Activated CD4-positive, alpha-beta T cell treated with anti-CD3 and anti-CD28 coated beads for 36 hours (primary cell): ENCODE measurements at regions of chr16 and their contacts with region 1.

Region 1: GRCh38 chr16:69565671-69566239 is at the start of gene NFAT5:
- DNase-seq: peak; percentile 94
- ATAC-seq: peak; percentile 25
- H3K4me3 Mint-ChIP-seq: peak within 1 kb of the TSS; percentile 99
- H3K27ac Mint-ChIP-seq: peak within 1 kb of the TSS; percentile 99
- H3K4me1 Mint-ChIP-seq: peaks cover 54% of the 10 kb centered on the region
- H3K27me3 Mint-ChIP-seq: no peaks in the 10 kb centered on the region
- total RNA-seq, gene NFAT5: 29.6 to 37.9 TPM

Region 2: DNA sequence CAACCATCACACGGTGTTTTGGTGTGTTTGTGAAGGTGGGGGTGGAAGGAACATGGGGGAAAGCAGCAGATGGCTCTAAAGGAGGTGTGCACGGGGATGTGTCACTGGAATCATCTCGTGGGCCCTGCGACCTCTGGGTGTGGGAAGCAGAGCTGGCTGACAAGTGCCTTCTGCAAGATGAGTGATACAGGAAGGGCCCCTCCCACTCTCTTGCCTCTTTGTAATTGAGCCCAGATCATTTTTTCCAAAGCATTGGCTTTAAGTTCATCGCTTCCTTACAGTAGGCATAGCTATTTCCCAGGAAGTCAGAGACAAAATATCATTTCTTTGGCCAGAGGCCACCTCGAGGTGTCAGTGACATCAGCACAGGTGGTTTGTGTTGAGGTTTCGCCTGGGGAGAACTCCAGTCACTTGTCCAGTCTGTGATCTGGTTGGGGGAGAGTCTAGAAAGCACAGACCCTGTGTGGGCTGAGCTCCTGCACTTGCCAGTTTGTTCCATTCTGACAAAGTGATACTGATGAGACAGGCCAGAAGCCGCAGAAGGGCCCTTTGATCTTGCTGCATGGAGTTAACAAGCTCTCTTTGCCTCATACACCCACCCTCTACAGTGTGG is 399.4 kb before region 1 on chr16:
- CTCF ChIA-PET with region 1: no interaction called
- POLR2A ChIA-PET with region 1: interaction called, 6 read pairs
- intact Hi-C with region 1: loop called in 1 of 2 experiments (anchors 2 kb)
- DNase-seq: peak; percentile 91
- ATAC-seq: peak; percentile 92
- H3K4me3 Mint-ChIP-seq: peak overlapping the region; percentile 32
- H3K27ac Mint-ChIP-seq: peak overlapping the region; percentile 87
- H3K4me1 Mint-ChIP-seq: peaks cover 52% of the 10 kb centered on the region
- H3K27me3 Mint-ChIP-seq: no peaks in the 10 kb centered on the region

Region 3: GRCh38 chr16:69386596-69386995 is 179.2 kb before region 1 on chr16:
- CTCF ChIA-PET with region 1: interaction called, 4 read pairs
- POLR2A ChIA-PET with region 1: no interaction called
- intact Hi-C with region 1: loop called in 1 of 2 experiments (anchors 1 kb)
- DNase-seq: no peak
- ATAC-seq: no peak
- H3K4me3 Mint-ChIP-seq: peak overlapping the region; percentile 100
- H3K27ac Mint-ChIP-seq: peak overlapping the region; percentile 55
- H3K4me1 Mint-ChIP-seq: peaks cover 29% of the 10 kb centered on the region
- H3K27me3 Mint-ChIP-seq: no peaks in the 10 kb centered on the region

Region 4: GRCh38 chr16:69465083-69465721 is 100.6 kb before region 1 on chr16:
- CTCF ChIA-PET with region 1: no interaction called
- POLR2A ChIA-PET with region 1: interaction called, 6 read pairs
- intact Hi-C with region 1: loop called in 1 of 2 experiments (anchors 1 kb)
- DNase-seq: peak; percentile 26
- ATAC-seq: peak; percentile 65
- H3K4me3 Mint-ChIP-seq: no peak overlapping the region
- H3K27ac Mint-ChIP-seq: peak overlapping the region; percentile 48
- H3K4me1 Mint-ChIP-seq: peaks cover 49% of the 10 kb centered on the region
- H3K27me3 Mint-ChIP-seq: no peaks in the 10 kb centered on the region

Region 5: GRCh38 chr16:69607674-69608073 is 41.9 kb after region 1 on chr16:
- CTCF ChIA-PET with region 1: no interaction called
- POLR2A ChIA-PET with region 1: interaction called, 10 read pairs
- intact Hi-C with region 1: loop called (anchors 1 to 5 kb)
- DNase-seq: no peak
- ATAC-seq: peak; percentile 75
- H3K4me3 Mint-ChIP-seq: peak overlapping the region; percentile 48
- H3K27ac Mint-ChIP-seq: peak overlapping the region; percentile 94
- H3K4me1 Mint-ChIP-seq: peaks cover 55% of the 10 kb centered on the region
- H3K27me3 Mint-ChIP-seq: no peaks in the 10 kb centered on the region

Region 6: DNA sequence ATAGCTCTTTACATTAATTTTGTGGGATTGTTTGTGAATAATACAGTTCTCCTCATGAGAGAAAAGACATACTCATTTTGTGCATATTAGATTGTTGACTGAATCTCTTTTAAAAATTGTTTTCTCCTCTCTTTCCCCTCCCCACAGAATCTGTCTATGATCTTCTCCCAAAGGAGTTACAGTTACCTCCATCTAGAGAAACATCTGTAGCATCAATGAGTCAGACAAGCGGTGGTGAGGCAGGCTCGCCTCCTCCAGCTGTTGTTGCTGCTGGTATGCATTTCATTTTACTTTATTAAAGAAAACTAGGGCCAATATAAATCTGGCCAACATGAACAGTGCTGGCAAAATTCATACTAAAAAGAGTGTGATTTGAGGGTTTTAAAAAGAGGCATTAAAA is 60.5 kb after region 1 on chr16:
- CTCF ChIA-PET with region 1: no interaction called
- POLR2A ChIA-PET with region 1: no interaction called
- intact Hi-C with region 1: no loop called
- DNase-seq: no peak
- ATAC-seq: no peak
- H3K4me3 Mint-ChIP-seq: no peak overlapping the region
- H3K27ac Mint-ChIP-seq: no peak overlapping the region
- H3K4me1 Mint-ChIP-seq: peaks cover 10% of the 10 kb centered on the region
- H3K27me3 Mint-ChIP-seq: no peaks in the 10 kb centered on the region